Pancreas (tissue), 10 donors: ENCODE measurements at regions of chr6 and their contacts with region 1.

Region 1: DNA sequence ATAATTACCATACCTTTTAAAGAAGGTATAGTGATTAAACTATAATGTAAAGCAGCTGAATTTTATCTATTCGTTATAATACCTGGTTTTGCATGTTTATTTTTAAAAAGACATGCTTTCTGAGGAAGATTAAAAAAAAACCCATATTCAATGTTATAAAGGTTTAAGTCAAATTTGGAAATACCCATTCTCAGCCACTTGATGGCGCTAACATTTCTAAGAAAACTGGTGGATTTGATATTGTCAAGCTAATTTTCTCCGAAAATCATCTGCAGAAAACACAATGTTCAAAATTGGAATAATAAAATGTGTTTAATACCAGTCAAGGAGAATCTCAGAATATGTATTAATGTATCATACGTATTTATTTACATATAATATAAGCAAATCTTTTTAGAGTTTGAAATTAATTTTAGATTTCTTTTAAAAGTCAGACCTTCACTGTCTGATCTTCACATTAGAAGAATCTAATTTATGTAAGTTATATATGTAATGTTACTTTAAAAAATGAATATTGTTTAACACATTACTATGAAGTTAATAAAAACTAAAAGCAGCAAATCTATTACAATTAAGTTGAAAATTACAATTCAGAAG is 35.0 kb downstream of the SHPRH start:
- DNase-seq: no peak
- ATAC-seq: no peak
- H3K4me3 ChIP-seq: no peak overlapping the region
- H3K27ac ChIP-seq: no peak overlapping the region
- H3K4me1 ChIP-seq: no peaks in the 10 kb centered on the region
- H3K27me3 ChIP-seq: no peaks in the 10 kb centered on the region
- CTCF ChIP-seq: peak; percentile 17 to 58 (median 37)

Region 2: DNA sequence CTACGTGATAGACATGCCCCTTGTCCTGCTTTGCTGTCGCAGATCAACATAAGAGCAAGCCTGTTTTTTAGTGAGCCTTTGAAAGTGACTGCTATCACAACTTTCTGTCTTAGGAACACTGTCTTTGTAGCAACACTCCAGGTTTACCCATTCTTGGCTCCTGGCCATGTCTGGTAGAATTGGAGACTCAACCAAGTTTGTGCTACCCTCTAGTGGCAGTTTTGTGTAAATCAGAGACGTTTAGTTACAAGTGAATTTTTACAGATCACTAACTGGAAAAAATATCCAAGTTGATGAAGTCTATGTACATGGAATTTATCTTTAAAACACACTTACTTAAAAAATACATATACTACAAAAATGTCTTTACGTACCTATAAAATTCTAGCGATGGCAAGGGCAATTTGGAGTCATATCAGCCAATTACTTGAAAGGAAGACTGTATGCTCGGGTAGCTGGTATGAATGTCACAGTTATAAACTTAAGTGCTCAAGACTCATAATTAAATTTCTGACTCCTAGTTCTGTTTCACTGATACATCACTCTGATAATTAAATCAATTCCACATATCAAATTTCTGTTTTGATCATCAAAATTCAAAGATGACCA is 771.0 kb after region 1 on chr6:
- intact Hi-C with region 1: loop called in 1 of 3 experiments (anchors 10 kb)
- DNase-seq: peak; percentile 23 to 80 (median 64)
- ATAC-seq: peak; percentile 86 to 95 (median 91)
- H3K4me3 ChIP-seq: no peak overlapping the region
- H3K27ac ChIP-seq: no peak overlapping the region
- H3K4me1 ChIP-seq: no peaks in the 10 kb centered on the region
- H3K27me3 ChIP-seq: no peaks in the 10 kb centered on the region
- CTCF ChIP-seq: peak; percentile 57 to 72 (median 64)

Region 3: GRCh38 chr6:147033267-147033666 is 1104.1 kb after region 1 on chr6:
- intact Hi-C with region 1: no loop called
- DNase-seq: no peak
- ATAC-seq: no peak
- H3K4me3 ChIP-seq: no peak overlapping the region
- H3K27ac ChIP-seq: no peak overlapping the region
- H3K4me1 ChIP-seq: peaks cover 0 to 5% (median 0%) of the 10 kb centered on the region in 3 donors
- H3K27me3 ChIP-seq: no peaks in the 10 kb centered on the region
- CTCF ChIP-seq: no peak